Endothelial cell of umbilical vein (primary cell): ENCODE measurements at regions of chr11 and their contacts with region 1.

Region 1: DNA sequence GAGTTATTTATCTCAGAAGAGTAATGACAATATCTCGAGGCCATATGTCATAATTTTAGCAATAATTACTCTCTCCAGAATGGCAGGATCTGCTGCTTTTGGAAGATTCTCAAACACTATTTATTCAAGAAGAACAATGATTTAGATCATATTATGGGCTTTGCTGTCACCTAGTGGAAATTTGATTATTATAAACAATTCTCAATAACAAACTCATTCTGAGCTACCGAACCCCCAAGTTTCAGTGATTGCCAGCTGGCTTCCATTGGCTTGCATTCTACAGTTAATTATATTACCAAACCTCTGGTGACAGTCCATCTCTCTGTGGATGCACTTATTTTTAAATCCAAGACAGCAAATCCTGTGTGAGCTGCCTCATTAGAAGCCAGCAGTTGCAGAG is 27.9 kb upstream of the SLC36A4 start:
- DNase-seq: peak; percentile 41
- H3K4me3 ChIP-seq: no peak overlapping the region
- H3K27ac ChIP-seq: no peak overlapping the region
- H3K4me1 ChIP-seq: no peaks in the 10 kb centered on the region
- H3K27me3 ChIP-seq: no peaks in the 10 kb centered on the region
- CTCF ChIP-seq: no peak
- POLR2A ChIP-seq: no peak

Region 2: DNA sequence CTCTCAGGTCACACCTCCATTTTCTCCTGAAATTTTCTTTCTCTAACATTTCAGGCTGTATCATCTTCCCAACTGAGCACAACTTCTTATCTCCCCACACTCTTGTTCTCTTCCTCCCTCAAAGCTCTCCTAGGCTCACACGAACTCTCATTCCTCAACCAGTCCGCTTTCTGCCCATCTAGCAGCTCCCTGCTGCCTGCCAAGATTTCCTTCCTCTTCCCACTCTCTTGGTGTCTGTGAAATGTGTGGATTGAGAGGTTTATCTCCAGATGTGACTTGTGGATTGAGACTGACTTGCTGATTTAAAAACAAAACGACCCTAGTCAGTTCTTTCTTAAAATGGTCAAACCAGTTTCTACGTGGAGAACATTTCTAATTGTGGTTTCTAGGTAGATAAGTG is 149.9 kb before region 1 on chr11:
- CTCF ChIA-PET with region 1: no interaction called
- POLR2A ChIA-PET with region 1: no interaction called
- dilution Hi-C with region 1: no loop called
- intact Hi-C with region 1: no loop called
- DNase-seq: no peak
- H3K4me3 ChIP-seq: no peak overlapping the region
- H3K27ac ChIP-seq: no peak overlapping the region
- H3K4me1 ChIP-seq: no peaks in the 10 kb centered on the region
- H3K27me3 ChIP-seq: no peaks in the 10 kb centered on the region
- CTCF ChIP-seq: no peak
- POLR2A ChIP-seq: no peak

Region 3: DNA sequence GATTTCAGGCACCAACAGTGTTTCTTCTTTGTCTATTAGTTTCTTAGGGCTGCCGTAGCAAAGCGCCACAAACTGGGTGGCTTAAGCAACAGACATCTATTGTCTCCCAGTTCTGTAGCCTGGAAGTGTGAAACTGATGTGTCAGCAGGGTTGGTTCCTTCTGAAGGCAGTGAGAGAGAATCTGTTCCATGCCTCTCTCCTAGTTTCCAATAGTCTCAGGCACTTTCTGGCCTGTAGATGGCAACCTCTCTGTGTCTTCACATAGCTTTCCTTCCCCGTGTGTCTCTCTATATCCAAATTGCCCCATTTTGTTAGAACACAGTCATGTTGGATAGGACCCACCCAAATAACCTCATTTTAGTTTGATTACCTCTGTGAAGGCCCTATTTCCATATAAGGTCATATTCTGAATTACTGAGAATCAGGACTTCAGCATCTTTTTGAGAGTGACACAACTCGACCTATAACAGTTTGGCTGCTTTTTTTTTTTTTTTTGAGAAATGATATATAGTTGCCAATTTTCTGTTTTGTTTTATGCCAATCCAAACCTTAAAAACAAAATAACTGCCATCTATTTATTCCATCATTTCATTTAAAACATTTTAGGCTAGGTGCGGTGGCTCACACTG is 136.1 kb before region 1 on chr11:
- CTCF ChIA-PET with region 1: interaction called, 14 read pairs
- POLR2A ChIA-PET with region 1: no interaction called
- dilution Hi-C with region 1: no loop called
- intact Hi-C with region 1: no loop called
- DNase-seq: peak; percentile 50
- H3K4me3 ChIP-seq: no peak overlapping the region
- H3K27ac ChIP-seq: no peak overlapping the region
- H3K4me1 ChIP-seq: no peaks in the 10 kb centered on the region
- H3K27me3 ChIP-seq: no peaks in the 10 kb centered on the region
- CTCF ChIP-seq: peak in 1 of 2 donors; percentile 55
- POLR2A ChIP-seq: no peak

Region 4: GRCh38 chr11:93244018-93244417 is 18.4 kb after region 1 on chr11:
- CTCF ChIA-PET with region 1: no interaction called
- POLR2A ChIA-PET with region 1: no interaction called
- dilution Hi-C with region 1: no loop called
- intact Hi-C with region 1: no loop called
- DNase-seq: no peak
- H3K4me3 ChIP-seq: no peak overlapping the region
- H3K27ac ChIP-seq: no peak overlapping the region
- H3K4me1 ChIP-seq: no peaks in the 10 kb centered on the region
- H3K27me3 ChIP-seq: peaks cover 0 to under 1% of the 10 kb centered on the region in 2 experiments
- CTCF ChIP-seq: no peak
- POLR2A ChIP-seq: no peak